Activated T-helper 1 cell treated with anti-CD3 and anti-CD28 coated beads, Interleukin-12 subunit alpha, Interleukin-12 subunit beta, Interleukin-2, Interleukin-4 antibody, amounts not matched to agents 30 ng/mL and 10 ng/mL and 1 ng/mL, durations not matched to agents 14 hours and 24 hours and 36 hours (primary cell): ENCODE measurements at regions of chr11 and their contacts with region 1.

Region 1: GRCh38 chr11:126303623-126304456 is at the start of gene DCPS:
- DNase-seq: peak; percentile 88
- H3K4me3 Mint-ChIP-seq: peak within 1 kb of the TSS; percentile 98
- H3K27ac Mint-ChIP-seq: peak within 1 kb of the TSS; percentile 98
- H3K4me1 Mint-ChIP-seq: peaks cover 35% of the 10 kb centered on the region
- H3K27me3 Mint-ChIP-seq: no peaks in the 10 kb centered on the region
- total RNA-seq, gene DCPS: 40.4 and 40.5 TPM in 2 replicates

Region 2: GRCh38 chr11:125902927-125903710 is 400.7 kb before region 1 on chr11 and contains the start of gene PUS3:
- intact Hi-C with region 1: loop called (anchors 2 kb)
- DNase-seq: peak; percentile 85
- H3K4me3 Mint-ChIP-seq: peak within 1 kb of the TSS; percentile 98
- H3K27ac Mint-ChIP-seq: peak within 1 kb of the TSS; percentile 88
- H3K4me1 Mint-ChIP-seq: peaks cover 28% of the 10 kb centered on the region
- H3K27me3 Mint-ChIP-seq: peaks cover 34% of the 10 kb centered on the region
- total RNA-seq, gene PUS3: 16.5 and 23.6 TPM in 2 replicates

Region 3: DNA sequence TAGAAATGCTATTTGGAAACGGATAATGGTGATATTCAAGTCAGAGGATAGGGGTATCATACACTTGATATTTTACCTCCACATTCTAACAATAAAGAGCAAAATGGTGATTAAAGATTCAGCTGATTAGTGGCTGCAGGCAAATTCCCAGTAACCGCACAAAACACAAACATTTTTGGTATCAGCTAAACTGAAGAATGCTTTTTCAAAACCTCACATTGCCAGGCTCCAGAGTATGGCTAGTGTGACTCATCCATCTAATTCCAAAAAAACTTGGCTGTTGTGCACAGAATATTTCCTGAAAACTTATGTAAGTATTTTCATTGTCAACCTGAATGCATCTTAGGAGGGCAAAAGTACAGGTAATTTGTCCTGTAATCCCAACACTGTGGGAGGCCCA is 46.1 kb before region 1 on chr11:
- intact Hi-C with region 1: no loop called
- DNase-seq: no peak
- H3K4me3 Mint-ChIP-seq: no peak overlapping the region
- H3K27ac Mint-ChIP-seq: no peak overlapping the region
- H3K4me1 Mint-ChIP-seq: no peaks in the 10 kb centered on the region
- H3K27me3 Mint-ChIP-seq: no peaks in the 10 kb centered on the region

Region 4: GRCh38 chr11:126268708-126269579 is 34.9 kb before region 1 on chr11 and contains the starts of genes FOXRED1 and SRPRA:
- intact Hi-C with region 1: loop called (anchors 1 kb)
- DNase-seq: peak; percentile 100
- H3K4me3 Mint-ChIP-seq: peak within 1 kb of the TSS; percentile 99
- H3K27ac Mint-ChIP-seq: peak within 1 kb of the TSS; percentile 96
- H3K4me1 Mint-ChIP-seq: peaks cover 45% of the 10 kb centered on the region
- H3K27me3 Mint-ChIP-seq: no peaks in the 10 kb centered on the region
- total RNA-seq, gene FOXRED1: 52.9 and 56.5 TPM in 2 replicates
- total RNA-seq, gene SRPRA: 194 and 195 TPM in 2 replicates

Region 5: DNA sequence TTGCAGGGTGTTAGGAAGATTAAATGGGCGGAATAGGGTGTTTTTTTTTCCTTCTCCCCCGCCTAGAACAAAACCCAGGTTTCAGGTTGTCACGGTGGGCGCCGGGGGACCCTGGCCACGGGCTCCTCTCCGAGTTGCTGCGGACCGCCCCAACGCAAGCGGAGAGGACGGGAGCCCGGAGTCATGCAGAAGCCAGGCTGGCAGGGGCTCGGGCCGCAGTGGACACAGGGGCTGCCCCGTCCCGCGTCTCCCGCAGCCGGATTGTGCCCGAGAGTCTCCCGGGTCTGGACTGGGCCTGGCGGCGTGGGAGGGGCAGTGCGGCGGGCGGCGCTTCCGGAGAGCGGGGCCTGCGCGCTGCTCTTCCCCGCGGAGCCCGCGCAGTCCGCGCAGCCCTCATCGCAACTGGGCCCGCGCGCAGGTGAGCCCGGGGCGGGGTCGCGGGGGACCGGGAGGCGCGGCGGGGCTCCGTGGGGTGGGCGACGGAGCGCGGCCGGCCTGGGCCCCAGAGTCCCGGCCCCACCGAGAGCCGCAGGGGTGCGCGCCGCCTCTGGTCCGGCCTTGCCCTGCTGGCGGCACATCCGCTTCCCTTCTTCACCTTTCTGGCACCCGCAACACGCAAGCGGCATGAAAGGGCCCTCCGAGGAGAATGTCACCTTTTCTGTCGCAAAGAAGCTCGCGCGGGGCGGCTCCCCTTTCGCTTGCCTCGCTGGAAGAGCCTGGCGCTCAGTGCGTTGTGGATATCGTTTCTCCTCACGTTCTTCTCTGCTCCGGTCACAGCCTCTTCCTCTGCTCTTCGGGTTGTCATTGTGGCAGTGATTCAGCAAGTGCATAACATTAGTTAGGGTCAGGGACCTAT is 20.9 kb before region 1 on chr11 and contains the start of gene TIRAP:
- intact Hi-C with region 1: loop called (anchors 1 kb)
- DNase-seq: peak; percentile 53
- H3K4me3 Mint-ChIP-seq: peak within 1 kb of the TSS; percentile 98
- H3K27ac Mint-ChIP-seq: peak within 1 kb of the TSS; percentile 98
- H3K4me1 Mint-ChIP-seq: peaks cover 45% of the 10 kb centered on the region
- H3K27me3 Mint-ChIP-seq: no peaks in the 10 kb centered on the region
- total RNA-seq, gene TIRAP: 13.0 and 15.0 TPM in 2 replicates

Region 6: GRCh38 chr11:126318574-126319373 is 14.9 kb after region 1 on chr11:
- intact Hi-C with region 1: loop called (anchors 1 kb)
- DNase-seq: peak; percentile 21
- H3K4me3 Mint-ChIP-seq: peak overlapping the region; percentile 22
- H3K27ac Mint-ChIP-seq: peak overlapping the region; percentile 73
- H3K4me1 Mint-ChIP-seq: peaks cover 45% of the 10 kb centered on the region
- H3K27me3 Mint-ChIP-seq: no peaks in the 10 kb centered on the region

Region 7: GRCh38 chr11:126355324-126355925 is 51.6 kb after region 1 on chr11 and contains the start of gene ST3GAL4:
- intact Hi-C with region 1: loop called (anchors 1 kb)
- DNase-seq: peak; percentile 64
- H3K4me3 Mint-ChIP-seq: peak within 1 kb of the TSS; percentile 95
- H3K27ac Mint-ChIP-seq: peak within 1 kb of the TSS; percentile 92
- H3K4me1 Mint-ChIP-seq: peaks cover 36% of the 10 kb centered on the region
- H3K27me3 Mint-ChIP-seq: no peaks in the 10 kb centered on the region
- total RNA-seq, gene ST3GAL4: 13.2 and 14.1 TPM in 2 replicates

Region 8: DNA sequence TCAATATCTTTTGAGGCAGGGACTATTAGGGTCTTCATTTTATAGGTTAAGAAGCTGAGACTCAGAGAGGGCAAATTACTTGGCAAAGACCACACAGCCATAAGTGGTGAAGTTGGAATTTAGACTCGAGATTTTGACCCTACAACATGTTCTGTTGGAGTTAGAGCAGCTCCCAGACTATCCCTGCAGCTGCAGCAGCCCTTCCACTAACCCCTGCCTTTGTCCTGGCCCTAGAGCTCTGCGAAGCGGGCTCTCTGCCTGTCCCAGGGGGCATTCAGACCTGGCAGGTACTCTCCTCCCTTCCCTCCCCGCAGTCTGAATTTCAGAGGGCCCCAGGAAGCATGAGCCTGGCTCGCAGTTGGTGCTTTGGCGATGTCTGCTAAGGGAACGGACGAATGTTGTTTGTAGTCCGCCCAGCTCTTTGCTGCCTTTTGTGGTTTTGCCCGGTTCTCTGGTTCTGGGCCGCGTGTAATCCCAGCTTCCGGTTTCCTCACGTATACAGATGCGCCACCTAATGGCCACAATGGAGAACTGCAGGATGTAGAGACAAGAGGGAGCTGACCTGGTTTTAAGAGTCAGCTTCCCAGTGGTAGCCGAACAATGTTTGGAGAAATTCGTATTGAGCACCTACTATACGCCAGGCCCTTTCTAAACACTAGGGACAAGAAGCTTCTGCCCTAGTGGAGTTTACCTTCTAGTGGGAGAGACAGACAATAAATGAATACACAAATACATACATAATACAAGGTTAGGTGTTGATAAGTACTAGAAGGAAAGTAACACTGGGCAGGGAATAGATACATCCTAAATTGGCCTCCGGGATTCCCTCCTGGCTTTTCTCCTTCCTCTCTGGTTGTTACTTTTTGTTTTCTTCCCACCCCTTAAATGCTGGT is 176.8 kb after region 1 on chr11:
- intact Hi-C with region 1: loop called (anchors 1 kb)
- DNase-seq: peak; percentile 66
- H3K4me3 Mint-ChIP-seq: peak overlapping the region; percentile 23
- H3K27ac Mint-ChIP-seq: peak overlapping the region; percentile 87
- H3K4me1 Mint-ChIP-seq: peaks cover 33% of the 10 kb centered on the region
- H3K27me3 Mint-ChIP-seq: peaks cover 3% of the 10 kb centered on the region